ENCODE measurements at regions of chr5 and their contacts with region 1.

Region 1: DNA sequence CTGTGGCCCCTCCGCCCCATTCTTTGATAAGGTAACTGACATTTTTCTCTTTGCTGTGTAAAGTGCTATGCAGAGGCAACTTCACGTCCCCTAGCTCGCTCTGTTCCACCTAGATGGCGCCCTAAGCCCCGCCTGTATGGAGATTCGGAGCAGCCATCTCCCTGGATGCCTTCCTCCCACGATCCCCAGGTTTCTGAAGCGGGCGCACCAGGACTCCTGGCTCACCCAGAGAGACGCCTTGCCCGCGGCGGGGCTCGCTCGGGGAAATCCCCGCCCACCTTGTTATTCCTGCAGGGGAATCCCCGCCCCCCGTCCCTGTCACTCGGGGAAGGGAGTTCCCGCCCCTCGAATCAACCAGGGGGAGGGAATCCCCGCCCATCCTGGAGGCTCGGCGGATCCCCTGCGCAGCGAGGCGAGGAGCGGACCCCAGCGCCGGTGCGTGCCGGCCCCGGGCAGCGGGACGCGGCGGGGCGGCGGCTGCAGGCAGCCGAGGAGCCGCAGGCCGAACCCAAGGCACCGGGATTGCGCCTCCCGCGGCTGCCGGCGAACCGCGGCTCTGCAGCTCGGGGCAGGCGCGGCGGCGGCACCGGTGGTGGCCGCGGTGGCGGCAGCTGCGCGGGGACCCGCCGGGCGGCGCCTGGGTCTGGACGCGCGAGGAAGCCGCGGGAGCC is at the start of gene PDZD2:
- DNase-seq: peak; percentile 88
- ATAC-seq: peak; percentile 74
- H3K4me3 Mint-ChIP-seq: peak within 1 kb of the TSS; percentile 82
- H3K27ac Mint-ChIP-seq: peak within 1 kb of the TSS; percentile 47; the same call in 1 of the 2 replicates
- H3K4me1 Mint-ChIP-seq: peaks cover 33% of the 10 kb centered on the region
- H3K27me3 Mint-ChIP-seq: no peaks in the 10 kb centered on the region
- CTCF ChIP-seq: no peak
- total RNA-seq, gene PDZD2: 7.1 to 11.4 TPM (median 7.5 TPM) in 3 replicates

Region 2: DNA sequence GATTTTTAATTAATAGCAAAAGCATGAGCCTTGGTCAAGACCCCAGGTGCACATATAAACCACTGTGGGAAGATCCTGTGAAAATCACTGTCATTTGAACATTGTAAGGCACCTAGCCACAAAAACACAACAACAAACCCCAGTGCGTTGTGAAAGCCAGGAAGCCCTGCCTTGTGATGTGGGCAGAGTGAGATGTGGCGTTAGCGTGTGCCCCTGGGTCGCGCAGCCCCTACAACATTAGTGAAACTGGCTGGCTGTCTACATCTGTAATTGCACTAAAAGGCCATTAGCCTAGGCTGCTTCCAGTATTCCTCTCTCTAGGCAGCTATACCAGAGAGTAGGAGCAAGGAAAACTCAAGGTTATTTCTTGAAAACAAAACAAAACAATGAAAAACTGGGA is 21.0 kb before region 1 on chr5:
- CTCF ChIA-PET with region 1: interaction called, 12 read pairs
- POLR2A ChIA-PET with region 1: interaction called, 5 read pairs
- DNase-seq: no peak
- ATAC-seq: no peak
- H3K4me3 Mint-ChIP-seq: no peak overlapping the region
- H3K27ac Mint-ChIP-seq: peak overlapping the region; percentile 86
- H3K4me1 Mint-ChIP-seq: peaks cover 47% of the 10 kb centered on the region
- H3K27me3 Mint-ChIP-seq: no peaks in the 10 kb centered on the region
- CTCF ChIP-seq: no peak

Region 3: DNA sequence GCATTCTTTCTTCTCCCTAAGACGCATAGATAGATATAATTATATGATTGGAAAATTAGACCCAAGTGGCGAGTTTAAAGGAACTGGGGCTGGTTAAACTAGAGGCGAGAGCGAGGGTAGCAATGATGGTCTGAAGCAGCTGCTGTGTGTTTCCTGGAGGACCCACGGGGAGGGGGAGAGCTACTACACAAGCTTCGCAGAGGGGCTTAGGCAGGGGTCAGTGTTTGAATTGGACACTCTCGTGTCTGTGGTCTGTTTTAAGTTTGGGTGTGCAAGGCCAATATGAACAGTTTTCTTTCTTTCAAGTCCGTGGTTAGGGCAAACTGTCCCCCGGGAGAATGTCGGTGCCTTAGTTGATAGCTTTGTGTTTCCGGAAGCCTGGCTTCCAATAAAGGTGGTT is 43.1 kb after region 1 on chr5:
- CTCF ChIA-PET with region 1: interaction called, 11 read pairs
- POLR2A ChIA-PET with region 1: no interaction called
- DNase-seq: no peak
- ATAC-seq: peak; percentile 46; the same call in 1 of the 2 replicates
- H3K4me3 Mint-ChIP-seq: no peak overlapping the region
- H3K27ac Mint-ChIP-seq: no peak overlapping the region
- H3K4me1 Mint-ChIP-seq: peaks cover 30% of the 10 kb centered on the region
- H3K27me3 Mint-ChIP-seq: no peaks in the 10 kb centered on the region
- CTCF ChIP-seq: no peak